ENCODE measurements at regions of chr11 and their contacts with region 1.

Region 1: GRCh38 chr11:117426269-117426685 is 98.6 kb downstream of the CEP164 start:
- DNase-seq: peak; percentile 83
- ATAC-seq: peak; percentile 45

Region 2: DNA sequence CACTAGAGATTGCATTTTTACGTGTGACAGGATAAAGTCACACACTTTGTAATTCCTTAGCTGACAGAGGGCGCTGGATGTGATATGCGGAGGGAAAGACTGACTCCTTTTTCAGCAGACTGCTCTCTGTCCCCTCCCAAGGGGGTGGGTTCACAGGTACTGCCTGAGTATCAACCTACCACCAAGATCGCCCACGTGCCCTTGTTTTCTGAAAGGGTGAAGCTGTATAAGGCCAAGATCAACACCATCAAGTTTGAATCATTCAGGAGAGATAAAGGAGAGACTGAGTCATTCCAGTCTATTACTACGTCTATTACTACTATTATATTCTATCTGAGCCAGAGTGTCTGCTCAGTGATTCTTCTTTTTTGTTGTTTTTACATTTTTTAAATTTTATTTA is 684.2 kb before region 1 on chr11:
- intact Hi-C with region 1: no loop called
- DNase-seq: no peak
- ATAC-seq: no peak

Region 3: GRCh38 chr11:117817368-117818040 is 391.2 kb after region 1 on chr11:
- intact Hi-C with region 1: loop called (anchors 1 kb)
- DNase-seq: peak; percentile 88
- ATAC-seq: peak; percentile 67